Colonic mucosa (tissue), 4 donors: ENCODE measurements at regions of chr17 and their contacts with region 1.

Region 1: DNA sequence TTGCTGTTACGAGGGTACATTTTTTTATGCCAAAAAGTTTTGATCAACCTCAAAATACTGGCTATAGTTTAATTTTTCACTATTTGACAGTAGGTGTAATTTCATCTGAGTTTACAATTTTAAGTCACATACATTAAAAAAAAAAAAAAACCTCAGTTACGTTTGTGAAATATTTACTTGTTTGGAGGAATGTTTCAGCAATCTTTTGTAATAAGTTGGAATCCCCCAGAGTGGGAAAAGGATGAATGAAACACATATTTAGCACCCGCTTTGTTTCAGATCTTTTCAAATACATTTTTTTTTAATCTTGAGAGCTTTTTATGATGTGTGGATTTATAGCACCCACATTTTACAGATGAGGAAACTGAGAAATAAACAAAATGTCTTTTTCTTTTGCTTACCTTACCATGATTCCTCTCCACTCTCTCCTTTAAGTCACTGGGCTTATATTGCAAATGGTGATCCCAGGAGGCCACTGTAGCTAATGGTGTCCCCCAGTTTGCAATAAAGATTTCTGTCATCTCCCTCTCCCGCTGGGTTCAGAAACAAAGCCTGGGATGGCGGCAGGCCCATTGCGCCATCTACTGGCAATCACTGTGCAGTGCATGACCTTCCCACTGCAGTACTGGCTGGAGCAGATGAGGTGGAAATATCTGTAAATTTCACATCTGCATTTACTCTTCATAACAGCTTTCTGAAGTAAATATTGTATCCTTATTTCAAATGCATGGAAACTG is 27.7 kb downstream of the TBC1D3B start:
- DNase-seq: peak; percentile 76
- H3K4me3 ChIP-seq: no peak overlapping the region
- H3K27ac ChIP-seq: no peak overlapping the region
- H3K4me1 ChIP-seq: no peaks in the 10 kb centered on the region
- H3K27me3 ChIP-seq: no peaks in the 10 kb centered on the region
- CTCF ChIP-seq: peak; percentile 100

Region 2: GRCh38 chr17:35898283-35899070 is 250.2 kb before region 1 on chr17:
- intact Hi-C with region 1: no loop called
- DNase-seq: peak; percentile 46
- H3K4me3 ChIP-seq: no peak overlapping the region
- H3K27ac ChIP-seq: no peak overlapping the region
- H3K4me1 ChIP-seq: no peaks in the 10 kb centered on the region
- H3K27me3 ChIP-seq: no peaks in the 10 kb centered on the region
- CTCF ChIP-seq: no peak

Region 3: GRCh38 chr17:35930211-35931065 is 218.3 kb before region 1 on chr17 and contains the start of gene RDM1:
- intact Hi-C with region 1: no loop called
- DNase-seq: peak; percentile 88
- H3K4me3 ChIP-seq: peak within 1 kb of the TSS; percentile 38
- H3K27ac ChIP-seq: no peak within 1 kb of the TSS
- H3K4me1 ChIP-seq: no peaks in the 10 kb centered on the region
- H3K27me3 ChIP-seq: no peaks in the 10 kb centered on the region
- CTCF ChIP-seq: no peak
- total RNA-seq, gene RDM1: 0.66 to 7.8 TPM

Region 4: GRCh38 chr17:35969558-35970380 is 179.0 kb before region 1 on chr17:
- intact Hi-C with region 1: loop called (anchors 2 kb)
- DNase-seq: peak; percentile 91
- H3K4me3 ChIP-seq: no peak overlapping the region
- H3K27ac ChIP-seq: no peak overlapping the region
- H3K4me1 ChIP-seq: no peaks in the 10 kb centered on the region
- H3K27me3 ChIP-seq: no peaks in the 10 kb centered on the region
- CTCF ChIP-seq: peak; percentile 82

Region 5: GRCh38 chr17:36072431-36073121 is 76.2 kb before region 1 on chr17:
- intact Hi-C with region 1: loop called (anchors 5 kb)
- DNase-seq: peak; percentile 84
- H3K4me3 ChIP-seq: no peak overlapping the region
- H3K27ac ChIP-seq: no peak overlapping the region
- H3K4me1 ChIP-seq: no peaks in the 10 kb centered on the region
- H3K27me3 ChIP-seq: no peaks in the 10 kb centered on the region
- CTCF ChIP-seq: peak; percentile 63